GM13977 (cell line): ENCODE measurements at regions of chr1 and their contacts with region 1.

Region 1: GRCh38 chr1:20633190-20634064 is at the start of gene PINK1:
- DNase-seq: peak; percentile 93
- CTCF ChIP-seq: peak; percentile 100

Region 2: DNA sequence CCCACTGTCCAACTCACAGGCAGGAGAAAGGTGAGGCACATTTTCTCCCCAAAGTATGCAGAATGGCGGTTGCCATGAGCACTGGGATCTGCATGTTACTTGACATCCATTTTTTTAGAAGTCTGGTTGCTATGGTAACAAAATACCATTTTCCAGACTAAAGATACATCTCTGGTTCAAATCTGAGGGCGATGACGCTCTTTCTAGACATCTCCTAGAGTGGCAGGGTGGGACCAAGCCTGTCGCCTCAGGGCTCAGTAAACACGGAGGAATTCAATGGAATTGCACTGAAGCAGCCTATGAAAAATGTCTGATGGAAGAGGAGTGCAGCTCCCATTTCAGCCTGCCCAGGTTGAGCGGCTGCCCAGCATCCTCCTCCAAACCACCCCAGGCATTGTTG is 102.5 kb before region 1 on chr1:
- in situ Hi-C with region 1: loop called (anchors 25 kb)
- DNase-seq: no peak
- CTCF ChIP-seq: no peak

Region 3: DNA sequence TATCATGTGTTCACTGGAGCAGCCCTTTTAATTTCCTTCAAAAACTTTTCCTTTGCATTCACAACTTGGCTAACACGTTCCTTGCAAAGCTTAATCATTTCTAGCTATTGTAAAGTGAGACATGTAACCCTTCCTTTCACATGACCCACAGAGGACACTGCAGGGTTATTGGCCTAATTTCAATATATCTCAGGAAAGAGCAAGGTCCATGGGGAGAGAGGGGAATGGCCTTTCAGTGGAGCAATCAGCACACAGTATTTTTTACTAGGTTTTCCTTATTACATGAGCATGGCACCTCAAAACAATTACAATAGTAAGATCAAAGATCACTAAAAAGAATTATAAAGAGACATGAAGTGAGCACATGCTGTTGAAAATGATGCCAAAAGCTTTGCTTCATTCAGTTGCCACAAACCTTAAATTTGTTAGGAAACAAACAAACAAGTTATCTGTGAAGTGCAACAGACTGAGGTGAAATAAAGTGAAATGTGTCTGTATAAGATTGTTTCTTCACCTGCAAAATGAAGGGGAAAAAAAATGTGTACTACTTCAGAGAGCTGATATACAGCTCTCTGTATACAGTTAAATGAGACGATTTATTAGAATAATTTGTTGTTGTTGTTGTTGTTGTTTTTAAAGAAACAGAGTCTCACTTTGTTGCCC is 481.8 kb after region 1 on chr1:
- in situ Hi-C with region 1: no loop called
- DNase-seq: no peak
- CTCF ChIP-seq: no peak